CD8-positive, alpha-beta T cell (primary cell): ENCODE measurements at regions of chr14 and their contacts with region 1.

Region 1: GRCh38 chr14:97602438-97603117 is 805.4 kb downstream of the VRK1 start:
- DNase-seq: peak; percentile 61 to 91 (median 80)
- ATAC-seq: peak; percentile 90
- H3K4me3 ChIP-seq: peak overlapping the region; percentile 19 to 21
- H3K4me3 Mint-ChIP-seq: no peak overlapping the region
- H3K27ac ChIP-seq: peak overlapping the region; percentile 66 to 84
- H3K27ac Mint-ChIP-seq: no peak overlapping the region
- H3K4me1 ChIP-seq: peaks cover 45% of the 10 kb centered on the region
- H3K4me1 Mint-ChIP-seq: peaks cover 38% of the 10 kb centered on the region
- H3K27me3 ChIP-seq: no peaks in the 10 kb centered on the region
- H3K27me3 Mint-ChIP-seq: no peaks in the 10 kb centered on the region
- CTCF ChIP-seq: no peak

Region 2: GRCh38 chr14:97458661-97459579 is 143.7 kb before region 1 on chr14:
- CTCF ChIA-PET with region 1: no interaction called
- POLR2A ChIA-PET with region 1: interaction called, 8 read pairs
- intact Hi-C with region 1: loop called (anchors 1 to 2 kb)
- DNase-seq: peak; percentile 60 to 92 (median 84)
- ATAC-seq: peak; percentile 81
- H3K4me3 ChIP-seq: peak overlapping the region; percentile 53 to 62
- H3K4me3 Mint-ChIP-seq: peak overlapping the region; percentile 88
- H3K27ac ChIP-seq: peak overlapping the region; percentile 82 to 88
- H3K27ac Mint-ChIP-seq: peak overlapping the region; percentile 97
- H3K4me1 ChIP-seq: peaks cover 34% of the 10 kb centered on the region
- H3K4me1 Mint-ChIP-seq: peaks cover 75% of the 10 kb centered on the region
- H3K27me3 ChIP-seq: no peaks in the 10 kb centered on the region
- H3K27me3 Mint-ChIP-seq: no peaks in the 10 kb centered on the region
- CTCF ChIP-seq: no peak

Region 3: DNA sequence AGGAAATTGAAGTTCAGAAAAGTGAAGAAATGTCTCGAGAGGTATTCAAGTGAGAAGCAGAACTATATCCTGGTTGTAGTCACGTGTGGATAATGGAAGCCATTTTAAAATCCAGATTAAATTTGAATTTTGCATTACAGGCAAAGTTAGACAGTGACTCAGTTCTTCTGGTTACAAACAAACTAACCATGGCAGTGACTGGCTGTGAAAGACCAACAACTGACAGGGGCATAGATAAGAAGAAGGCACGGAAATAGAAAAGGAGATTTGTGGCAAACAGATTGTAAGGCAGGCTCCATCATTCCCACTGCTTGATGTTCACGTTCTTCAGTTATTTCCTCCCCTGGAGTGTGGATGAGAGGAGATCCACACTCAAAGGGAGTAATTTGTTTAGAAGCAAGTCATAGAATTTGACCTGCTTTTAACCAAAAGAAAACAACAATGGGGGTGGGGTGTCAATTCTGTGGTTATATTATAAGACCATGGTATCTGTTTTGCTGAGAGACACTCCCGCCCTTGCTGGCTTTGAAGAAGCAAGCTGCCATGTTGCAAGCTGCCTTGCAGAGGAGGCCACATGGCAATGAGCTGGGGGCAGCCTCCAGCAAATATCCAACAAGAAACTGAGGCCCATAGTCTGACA is 10.1 kb before region 1 on chr14:
- CTCF ChIA-PET with region 1: interaction called, 3 read pairs
- POLR2A ChIA-PET with region 1: interaction called, 15 read pairs
- intact Hi-C with region 1: loop called in 1 of 2 experiments (anchors 1 kb)
- DNase-seq: peak in 4 of 9 experiments; percentile 21 to 61 (median 52)
- ATAC-seq: peak; percentile 66
- H3K4me3 ChIP-seq: no peak overlapping the region
- H3K4me3 Mint-ChIP-seq: no peak overlapping the region
- H3K27ac ChIP-seq: peak overlapping the region in 1 of 2 experiments; percentile 64
- H3K27ac Mint-ChIP-seq: peak overlapping the region; percentile 87
- H3K4me1 ChIP-seq: peaks cover 15% of the 10 kb centered on the region
- H3K4me1 Mint-ChIP-seq: peaks cover 59% of the 10 kb centered on the region
- H3K27me3 ChIP-seq: no peaks in the 10 kb centered on the region
- H3K27me3 Mint-ChIP-seq: no peaks in the 10 kb centered on the region
- CTCF ChIP-seq: no peak

Region 4: DNA sequence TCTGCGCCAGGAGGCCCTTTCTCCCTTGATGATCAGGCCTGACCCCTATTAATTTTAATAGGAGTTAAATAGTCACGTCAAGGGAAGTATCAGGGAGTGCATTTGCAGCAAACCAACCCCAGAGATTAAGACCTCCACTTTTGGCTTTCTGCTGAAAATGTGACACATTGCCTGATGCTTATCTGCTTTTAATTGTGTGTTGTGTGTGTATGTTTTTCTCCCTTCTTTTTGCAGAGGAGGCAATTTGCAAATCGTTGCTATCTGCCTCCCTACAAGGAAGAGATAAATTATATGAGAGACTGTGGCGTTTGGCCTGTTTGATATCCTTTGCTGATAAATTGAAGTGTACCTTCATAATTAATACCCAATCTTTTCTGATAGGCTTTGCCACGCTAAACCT is 17.5 kb after region 1 on chr14:
- CTCF ChIA-PET with region 1: interaction called, 9 read pairs
- POLR2A ChIA-PET with region 1: interaction called, 12 read pairs
- intact Hi-C with region 1: loop called (anchors 1 to 2 kb)
- DNase-seq: peak in 1 of 9 experiments; percentile 42
- ATAC-seq: peak; percentile 15
- H3K4me3 ChIP-seq: peak overlapping the region in 1 of 2 experiments; percentile 12
- H3K4me3 Mint-ChIP-seq: peak overlapping the region; percentile 83
- H3K27ac ChIP-seq: peak overlapping the region; percentile 36 to 84
- H3K27ac Mint-ChIP-seq: peak overlapping the region; percentile 98
- H3K4me1 ChIP-seq: peaks cover 43% of the 10 kb centered on the region
- H3K4me1 Mint-ChIP-seq: peaks cover 53% of the 10 kb centered on the region
- H3K27me3 ChIP-seq: no peaks in the 10 kb centered on the region
- H3K27me3 Mint-ChIP-seq: no peaks in the 10 kb centered on the region
- CTCF ChIP-seq: no peak

Region 5: DNA sequence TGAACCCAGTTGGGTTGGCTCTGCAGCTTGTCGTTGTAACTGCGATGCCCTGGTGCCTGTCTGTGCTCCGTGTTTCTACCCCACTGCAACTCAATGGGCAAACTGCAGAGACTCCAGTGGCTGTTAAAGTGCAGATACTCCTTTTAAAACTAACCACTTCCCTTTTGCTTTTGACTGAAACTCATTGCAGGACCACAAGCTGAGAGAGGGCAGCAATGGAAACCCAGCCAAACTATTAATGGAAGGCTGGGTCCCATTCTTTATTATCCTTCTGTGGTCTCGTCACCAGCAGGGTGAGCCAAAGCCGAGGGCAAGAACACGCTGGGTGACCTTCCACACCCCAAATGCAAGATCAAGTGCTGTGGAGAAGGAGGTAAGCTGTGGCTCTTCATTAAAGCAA is 105.0 kb after region 1 on chr14:
- CTCF ChIA-PET with region 1: interaction called, 12 read pairs
- POLR2A ChIA-PET with region 1: interaction called, 9 read pairs
- intact Hi-C with region 1: loop called in 1 of 2 experiments (anchors 2 kb)
- DNase-seq: peak in 6 of 9 experiments; percentile 26 to 68 (median 50)
- ATAC-seq: peak; percentile 13
- H3K4me3 ChIP-seq: peak overlapping the region; percentile 6 to 16
- H3K4me3 Mint-ChIP-seq: peak overlapping the region; percentile 63
- H3K27ac ChIP-seq: peak overlapping the region in 1 of 2 experiments; percentile 63
- H3K27ac Mint-ChIP-seq: peak overlapping the region; percentile 78
- H3K4me1 ChIP-seq: peaks cover 84% of the 10 kb centered on the region
- H3K4me1 Mint-ChIP-seq: peaks cover 97% of the 10 kb centered on the region
- H3K27me3 ChIP-seq: no peaks in the 10 kb centered on the region
- H3K27me3 Mint-ChIP-seq: no peaks in the 10 kb centered on the region
- CTCF ChIP-seq: no peak